Heart right ventricle (tissue), 16 donors: ENCODE measurements at regions of chr5 and their contacts with region 1.

Region 1: DNA sequence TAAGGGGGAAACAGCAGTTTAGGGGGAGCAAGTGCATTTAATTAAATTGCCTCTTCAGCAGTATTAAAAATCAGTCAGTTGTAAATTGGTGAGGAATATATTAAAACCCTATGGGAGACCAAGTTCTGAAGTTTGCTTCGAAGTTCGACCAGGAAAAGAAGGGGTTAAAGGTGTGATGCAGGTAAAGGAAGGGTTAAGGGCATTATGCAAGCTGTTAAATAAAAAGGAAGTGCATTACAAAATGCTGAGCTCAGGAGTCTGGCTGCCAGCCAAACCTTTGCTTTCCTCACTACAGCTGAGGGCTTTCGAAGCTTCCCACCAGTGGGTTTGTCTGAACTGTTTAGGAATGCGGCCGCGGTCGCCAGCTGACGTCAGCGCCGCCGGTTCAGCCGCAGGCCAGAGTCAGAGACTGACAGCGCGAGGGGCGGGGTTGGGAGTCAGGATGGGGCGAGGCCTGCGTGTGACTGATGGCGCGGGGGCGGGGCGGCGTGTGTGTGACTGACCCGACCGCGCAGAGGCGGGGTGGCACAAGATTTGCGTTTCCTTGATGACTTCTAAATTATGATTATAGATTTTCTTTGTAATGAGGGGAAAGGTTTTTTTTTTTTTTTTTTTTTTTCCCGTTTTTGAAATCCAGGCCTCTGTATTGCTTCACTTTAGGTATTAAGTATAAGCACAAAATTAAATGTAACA is 76.6 kb downstream of the ZSWIM6 start:
- DNase-seq: peak; percentile 99
- ATAC-seq: peak; percentile 100
- H3K4me3 ChIP-seq: peak overlapping the region in 8 of 10 donors; percentile 2 to 38 (median 32)
- H3K27ac ChIP-seq: peak overlapping the region in 6 of 10 donors; percentile 8 to 67 (median 41)
- H3K4me1 ChIP-seq: peaks cover 0 to 27% (median 20%) of the 10 kb centered on the region in 9 donors
- H3K27me3 ChIP-seq: no peaks in the 10 kb centered on the region
- CTCF ChIP-seq: peak in 3 of 9 donors; percentile 11 to 30 (median 29)

Region 2: DNA sequence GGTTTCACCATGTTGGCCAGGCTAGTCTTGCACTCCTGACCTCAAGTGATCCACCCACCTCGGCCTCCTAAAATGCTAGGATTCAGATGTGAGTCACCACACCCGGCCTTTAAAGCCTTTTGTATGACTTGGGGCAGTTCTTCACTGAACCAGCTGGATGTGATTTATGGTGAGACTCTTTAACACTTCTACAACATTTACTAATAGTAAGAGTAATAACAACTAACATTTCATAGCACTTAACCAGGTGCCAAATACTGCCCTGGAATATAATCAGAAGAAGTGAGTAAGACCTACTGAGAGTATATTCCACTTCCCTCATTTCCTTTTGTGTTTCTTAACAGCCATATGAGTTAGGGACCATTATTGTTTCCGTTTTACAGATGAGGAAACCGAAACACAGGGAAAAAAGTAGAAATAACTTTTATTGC is 66.5 kb before region 1 on chr5:
- intact Hi-C with region 1: loop called in 2 of 10 experiments (anchors 10 kb)
- DNase-seq: no peak
- ATAC-seq: no peak
- H3K4me3 ChIP-seq: no peak overlapping the region
- H3K27ac ChIP-seq: no peak overlapping the region
- H3K4me1 ChIP-seq: peaks cover 0 to 84% (median 24%) of the 10 kb centered on the region in 9 donors
- H3K27me3 ChIP-seq: no peaks in the 10 kb centered on the region
- CTCF ChIP-seq: no peak

Region 3: DNA sequence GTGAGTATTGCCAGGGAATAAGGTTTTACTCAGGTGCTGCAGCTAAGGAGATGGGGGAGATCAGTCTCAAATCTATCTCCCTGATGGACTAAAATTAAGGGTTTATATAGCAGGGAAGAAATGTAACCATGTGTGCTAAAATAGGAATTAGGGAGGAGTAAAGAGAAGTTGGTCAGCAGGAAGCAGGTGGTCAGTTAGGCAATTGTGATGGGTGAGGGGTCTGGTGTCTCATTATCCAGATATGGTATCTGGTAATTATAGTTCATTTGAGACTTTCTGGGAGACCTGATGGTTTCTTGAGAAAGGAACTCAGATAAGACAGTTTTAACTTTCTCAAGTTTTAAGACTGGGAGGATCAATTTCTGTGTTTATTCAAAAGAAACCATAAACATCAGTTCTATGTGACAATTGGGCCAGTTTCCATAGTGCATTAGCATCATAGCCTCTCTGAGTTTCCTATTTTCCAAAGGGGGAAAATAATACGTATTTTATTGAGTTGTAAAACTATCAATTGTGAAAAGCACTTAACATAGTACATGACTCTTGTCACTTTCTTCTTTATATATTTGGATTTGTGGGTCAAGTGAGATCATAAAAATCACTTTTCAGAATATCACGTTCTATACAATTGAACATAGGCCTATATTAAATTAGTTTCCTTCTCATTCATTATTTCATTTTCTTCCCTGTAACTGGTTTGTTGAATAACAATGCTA is 39.3 kb after region 1 on chr5:
- intact Hi-C with region 1: loop called in 1 of 10 experiments (anchors 2 kb)
- DNase-seq: no peak
- ATAC-seq: no peak
- H3K4me3 ChIP-seq: no peak overlapping the region
- H3K27ac ChIP-seq: no peak overlapping the region
- H3K4me1 ChIP-seq: peaks cover 3 to 35% (median 19%) of the 10 kb centered on the region in 9 donors
- H3K27me3 ChIP-seq: no peaks in the 10 kb centered on the region
- CTCF ChIP-seq: no peak

Region 4: DNA sequence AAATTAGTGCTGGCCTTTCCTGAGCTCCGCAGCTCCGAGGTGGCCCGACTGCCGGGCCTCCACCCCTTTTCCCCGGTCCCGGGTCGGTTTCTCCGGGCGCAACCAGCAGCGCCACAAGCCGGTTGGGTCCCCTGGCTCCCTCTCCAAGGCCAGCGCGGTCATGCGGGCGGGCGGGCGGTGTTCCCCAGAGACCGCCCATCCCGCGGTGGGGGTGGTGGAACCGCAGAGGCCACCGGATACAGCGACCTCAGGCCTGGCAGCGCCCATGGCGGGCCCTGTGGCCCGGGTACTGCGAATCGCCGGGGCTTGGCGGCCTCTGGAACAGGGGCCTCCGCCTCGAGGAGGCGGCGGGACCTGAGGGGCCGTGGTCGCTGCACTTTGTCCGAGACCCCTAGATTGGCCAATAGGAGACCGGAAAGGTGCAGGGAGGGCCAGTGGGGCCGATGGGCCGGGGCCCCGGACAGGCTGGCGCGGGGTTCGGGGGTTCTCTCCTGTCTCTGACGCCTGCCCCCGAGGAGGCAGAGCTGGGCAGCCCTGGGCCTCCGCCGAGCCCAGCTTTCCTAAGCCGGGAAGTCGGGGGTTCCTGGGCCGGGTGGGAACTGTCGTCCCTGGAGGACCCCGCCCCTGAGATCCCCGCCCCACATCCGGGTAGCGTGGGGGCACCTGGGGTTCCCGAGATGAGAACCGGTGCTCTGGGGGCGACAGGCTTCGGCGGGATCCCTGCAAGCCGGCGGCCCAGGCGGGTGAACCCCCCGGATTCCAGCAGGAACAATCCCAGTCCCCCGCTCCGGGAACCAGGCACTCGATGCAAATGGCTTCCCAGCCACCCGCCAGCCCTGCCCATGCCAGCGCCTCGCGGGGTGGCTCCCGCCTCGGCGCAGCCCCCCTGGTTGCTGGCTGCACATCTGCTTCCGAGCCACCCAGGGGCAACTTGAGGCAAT is 217.3 kb after region 1 on chr5:
- intact Hi-C with region 1: loop called in 3 of 10 experiments (anchors 5 to 10 kb)
- DNase-seq: peak; percentile 82 to 84
- ATAC-seq: peak; percentile 93 to 99 (median 97)
- H3K4me3 ChIP-seq: peak overlapping the region; percentile 44 to 73 (median 64)
- H3K27ac ChIP-seq: peak overlapping the region; percentile 73 to 97 (median 90)
- H3K4me1 ChIP-seq: peaks cover 4 to 28% (median 19%) of the 10 kb centered on the region in 9 donors
- H3K27me3 ChIP-seq: peaks cover 0 to 19% (median 0%) of the 10 kb centered on the region in 7 donors
- CTCF ChIP-seq: peak in 2 of 9 donors; percentile 19 to 20

Region 5: DNA sequence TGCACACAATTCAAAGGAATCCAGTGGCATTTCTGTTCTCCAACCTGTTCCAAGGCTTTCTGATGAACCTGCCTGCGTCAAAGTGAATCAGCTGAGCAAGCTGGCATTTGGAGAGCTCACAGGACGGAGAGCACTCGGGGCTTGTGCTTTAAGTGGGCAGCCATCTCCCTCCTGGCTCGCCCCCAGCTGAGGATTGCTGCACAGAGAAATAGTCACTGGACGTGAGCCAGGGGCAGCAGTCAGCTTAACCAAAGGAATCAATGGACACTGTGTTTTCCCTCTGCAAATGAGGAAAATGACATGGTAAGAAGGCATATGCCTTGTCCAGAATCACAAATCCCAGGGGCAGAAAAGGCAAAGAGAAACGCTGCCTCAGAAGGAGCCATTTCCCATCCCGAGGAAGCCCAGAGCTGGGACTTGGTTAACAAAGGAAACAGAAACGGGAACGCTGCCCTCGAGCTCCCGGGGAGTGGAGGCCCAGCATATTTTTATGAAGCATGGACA is 222.9 kb after region 1 on chr5:
- intact Hi-C with region 1: loop called in 3 of 10 experiments (anchors 5 to 10 kb)
- DNase-seq: peak; percentile 52 to 72
- ATAC-seq: peak; percentile 43 to 93 (median 84)
- H3K4me3 ChIP-seq: peak overlapping the region in 1 of 10 donors; percentile 21
- H3K27ac ChIP-seq: peak overlapping the region in 9 of 10 donors; percentile 33 to 78 (median 63)
- H3K4me1 ChIP-seq: peaks cover 0 to 22% (median 17%) of the 10 kb centered on the region in 9 donors
- H3K27me3 ChIP-seq: no peaks in the 10 kb centered on the region
- CTCF ChIP-seq: no peak

Region 6: GRCh38 chr5:61658592-61659008 is 250.0 kb after region 1 on chr5:
- intact Hi-C with region 1: loop called in 1 of 10 experiments (anchors 10 kb)
- DNase-seq: peak; percentile 88
- ATAC-seq: peak; percentile 82 to 95 (median 92)
- H3K4me3 ChIP-seq: peak overlapping the region in 6 of 10 donors; percentile 1 to 35 (median 27)
- H3K27ac ChIP-seq: peak overlapping the region in 6 of 10 donors; percentile 25 to 62 (median 40)
- H3K4me1 ChIP-seq: peaks cover 0 to 8% (median 0%) of the 10 kb centered on the region in 9 donors
- H3K27me3 ChIP-seq: no peaks in the 10 kb centered on the region
- CTCF ChIP-seq: peak; percentile 88 to 97 (median 93)